ENCODE measurements at regions of chr1 and their contacts with region 1.

Region 1: DNA sequence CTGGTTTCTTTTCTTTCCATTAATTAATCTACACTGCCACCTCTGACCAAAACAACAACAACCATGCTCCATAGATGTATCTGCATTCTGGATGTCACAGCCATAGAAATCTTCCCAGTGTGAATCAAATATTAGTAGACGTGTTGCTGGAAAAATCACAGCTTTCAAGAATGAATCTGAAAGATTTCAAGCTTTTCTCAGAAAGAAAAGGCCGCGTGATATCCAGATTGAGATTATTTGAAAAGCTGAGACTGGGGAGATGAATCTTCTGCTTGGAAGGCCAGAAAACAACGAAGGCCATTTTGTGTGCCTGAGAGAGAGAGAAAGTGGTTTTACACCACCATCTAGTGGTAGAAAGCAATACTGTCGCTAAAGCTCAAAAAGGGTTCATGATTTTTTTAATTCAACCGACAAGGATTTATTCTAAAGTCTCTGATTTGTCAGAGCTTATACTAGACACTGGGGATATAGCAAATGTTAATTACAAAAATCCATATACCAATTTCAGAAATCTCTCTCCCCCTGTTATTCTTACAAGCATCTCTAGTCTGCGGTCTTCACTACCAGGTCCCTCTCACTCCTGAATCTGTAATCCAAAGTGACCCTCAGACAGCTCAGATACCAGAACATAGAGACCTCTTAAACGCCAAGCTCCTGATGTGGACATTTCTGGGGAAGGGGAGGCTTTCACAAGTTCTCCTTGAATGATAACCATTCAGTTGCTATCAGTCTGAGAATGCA is 87.5 kb upstream of the SGIP1 start:
- DNase-seq: peak in 1 of 2 donors; percentile 54
- ATAC-seq: peak in 7 of 8 donors; percentile 51 to 88 (median 70)
- H3K4me3 ChIP-seq: no peak overlapping the region
- H3K27ac ChIP-seq: peak overlapping the region in 8 of 10 donors; percentile 45 to 86 (median 66)
- H3K4me1 ChIP-seq: peaks cover 3 to 42% (median 33%) of the 10 kb centered on the region in 9 donors
- H3K27me3 ChIP-seq: no peaks in the 10 kb centered on the region
- CTCF ChIP-seq: peak; percentile 83 to 94 (median 88)

Region 2: DNA sequence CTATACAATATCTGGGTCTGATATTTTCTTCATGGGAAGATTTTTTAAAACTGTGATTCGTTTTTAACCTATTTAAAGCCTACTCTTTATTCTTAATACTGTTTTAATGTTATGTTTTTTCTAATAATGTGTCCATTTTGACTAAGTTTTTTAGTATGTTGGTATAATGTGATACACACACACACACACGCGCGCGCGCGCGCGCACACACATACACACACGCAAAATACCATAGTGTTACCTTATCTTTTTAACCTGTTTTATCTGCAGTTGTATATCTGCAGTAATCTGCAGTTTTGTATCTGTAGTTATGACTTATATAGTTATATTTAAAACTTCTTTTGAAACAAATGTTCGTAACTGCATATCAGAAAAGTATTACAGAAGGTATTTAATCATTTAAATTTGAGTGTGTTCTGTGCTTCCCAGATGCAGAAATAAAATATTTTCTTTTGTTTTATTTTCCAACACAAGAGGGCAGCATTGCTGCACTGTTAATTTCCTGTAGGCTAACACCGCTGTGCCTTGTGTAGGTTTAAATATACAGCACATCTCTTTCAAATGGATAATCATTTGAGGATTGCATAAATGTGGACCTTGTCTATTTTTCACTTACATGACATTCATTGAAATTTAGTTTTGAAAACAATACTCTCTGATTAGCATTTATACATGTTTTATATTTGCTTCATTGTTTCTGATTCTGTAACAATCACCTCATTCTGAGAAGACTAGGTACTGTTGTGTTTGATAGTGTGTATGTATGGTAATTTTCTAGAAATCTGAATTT is 487.7 kb before region 1 on chr1:
- intact Hi-C with region 1: loop called in 8 of 10 experiments (anchors 2 to 5 kb)
- DNase-seq: no peak
- ATAC-seq: peak in 3 of 8 donors; percentile 29 to 46 (median 45)
- H3K4me3 ChIP-seq: no peak overlapping the region
- H3K27ac ChIP-seq: no peak overlapping the region
- H3K4me1 ChIP-seq: peaks cover 0 to 8% (median 0%) of the 10 kb centered on the region in 9 donors
- H3K27me3 ChIP-seq: peaks cover 0 to 5% (median 0%) of the 10 kb centered on the region in 7 donors
- CTCF ChIP-seq: peak; percentile 62 to 89 (median 72)

Region 3: DNA sequence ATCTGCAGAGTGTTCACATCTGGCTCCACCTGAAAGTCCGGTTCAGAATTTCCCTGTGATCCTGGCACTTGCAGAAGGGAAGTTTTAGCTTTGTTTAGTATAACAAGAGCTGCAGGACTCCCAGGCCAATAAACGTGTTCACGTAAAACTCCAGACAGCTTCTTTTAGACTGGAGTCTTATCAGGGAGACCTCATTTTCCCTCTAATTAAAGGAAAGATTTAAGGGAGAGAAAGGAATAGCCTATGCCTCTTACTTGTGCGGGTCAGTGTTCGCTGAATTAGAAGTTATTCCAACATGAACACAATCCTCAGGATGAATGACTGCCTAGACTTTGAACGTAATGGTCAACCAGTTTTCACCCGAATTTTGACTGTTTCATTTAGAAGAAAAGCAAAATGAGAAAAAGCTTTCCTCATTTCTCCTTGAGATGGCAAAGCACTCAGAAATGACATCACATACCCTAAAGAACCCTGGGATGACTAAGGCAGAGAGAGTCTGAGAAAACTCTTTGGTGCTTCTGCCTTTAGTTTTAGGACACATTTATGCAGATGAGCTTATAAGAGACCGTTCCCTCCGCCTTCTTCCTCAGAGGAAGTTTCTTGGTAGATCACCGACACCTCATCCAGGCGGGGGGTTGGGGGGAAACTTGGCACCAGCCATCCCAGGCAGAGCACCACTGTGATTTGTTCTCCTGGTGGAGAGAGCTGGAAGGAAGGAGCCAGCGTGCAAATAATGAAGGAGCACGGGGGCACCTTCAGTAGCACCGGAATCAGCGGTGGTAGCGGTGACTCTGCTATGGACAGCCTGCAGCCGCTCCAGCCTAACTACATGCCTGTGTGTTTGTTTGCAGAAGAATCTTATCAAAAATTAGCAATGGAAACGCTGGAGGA is 114.5 kb before region 1 on chr1:
- intact Hi-C with region 1: loop called in 6 of 10 experiments (anchors 5 to 10 kb)
- DNase-seq: peak; percentile 68 to 83
- ATAC-seq: peak; percentile 44 to 87 (median 66)
- H3K4me3 ChIP-seq: peak overlapping the region; percentile 32 to 72 (median 60)
- H3K27ac ChIP-seq: peak overlapping the region; percentile 74 to 97 (median 89)
- H3K4me1 ChIP-seq: peaks cover 0 to 77% (median 33%) of the 10 kb centered on the region in 9 donors
- H3K27me3 ChIP-seq: no peaks in the 10 kb centered on the region
- CTCF ChIP-seq: peak in 7 of 9 donors; percentile 13 to 42 (median 35)

Region 4: DNA sequence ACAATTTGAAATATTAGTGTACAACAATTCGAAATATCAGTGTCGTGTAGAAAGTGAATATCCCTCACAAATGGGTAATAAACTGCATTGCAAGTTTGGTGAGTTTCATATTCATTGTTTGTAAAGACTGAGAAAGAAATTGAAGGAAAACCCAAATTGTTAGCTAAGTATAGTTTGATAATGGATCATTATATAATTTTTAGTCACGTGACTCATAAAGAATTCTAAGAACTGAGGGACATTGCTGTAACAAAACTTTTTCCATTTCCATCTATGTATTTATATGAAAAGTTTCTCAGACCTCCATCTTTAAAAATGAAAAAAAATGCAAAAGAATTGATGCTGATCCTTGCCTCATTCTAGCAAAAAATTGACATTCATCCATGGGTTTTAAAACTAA is 51.5 kb after region 1 on chr1:
- intact Hi-C with region 1: loop called in 6 of 10 experiments (anchors 2 to 5 kb)
- DNase-seq: no peak
- ATAC-seq: no peak
- H3K4me3 ChIP-seq: no peak overlapping the region
- H3K27ac ChIP-seq: no peak overlapping the region
- H3K4me1 ChIP-seq: no peaks in the 10 kb centered on the region
- H3K27me3 ChIP-seq: no peaks in the 10 kb centered on the region
- CTCF ChIP-seq: no peak

Region 5: DNA sequence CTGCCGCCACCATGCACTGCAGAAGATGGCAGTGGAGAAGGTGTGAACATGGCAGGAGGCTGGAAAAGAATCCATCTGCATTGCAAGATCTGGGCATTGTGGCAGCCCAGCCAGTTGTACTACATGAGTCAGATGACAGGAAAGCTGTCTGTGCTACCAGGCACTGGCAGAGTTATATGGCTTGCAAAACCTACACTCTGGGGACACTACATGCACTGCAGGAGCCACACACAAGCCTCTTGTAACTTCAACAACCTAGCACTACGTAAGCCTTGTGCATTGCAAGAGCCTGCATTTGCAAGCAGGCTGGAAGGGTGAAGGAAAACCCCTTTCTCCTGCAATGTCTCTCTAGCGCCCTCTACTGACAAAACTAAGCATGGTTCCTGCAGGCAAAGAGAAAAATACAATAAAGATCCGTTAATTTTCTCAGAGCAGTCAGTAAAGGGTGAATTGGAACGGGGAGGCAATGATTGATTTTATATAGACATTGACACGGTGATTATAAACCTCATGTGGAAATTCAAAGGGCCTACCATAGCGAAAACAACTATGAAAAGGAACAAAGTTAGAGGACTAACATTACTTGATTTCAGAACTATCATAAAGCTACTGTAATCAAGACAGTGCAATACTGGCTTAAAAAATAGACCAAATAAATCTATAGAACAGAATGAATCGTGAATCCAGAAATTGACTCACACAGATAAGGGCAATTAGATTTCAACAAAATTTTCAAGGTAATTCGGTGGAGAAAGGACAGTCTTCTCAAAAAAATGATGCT is 279.6 kb after region 1 on chr1:
- intact Hi-C with region 1: loop called in 7 of 10 experiments (anchors 5 to 10 kb)
- DNase-seq: peak in 1 of 2 donors; percentile 68
- ATAC-seq: peak; percentile 52 to 90 (median 73)
- H3K4me3 ChIP-seq: no peak overlapping the region
- H3K27ac ChIP-seq: no peak overlapping the region
- H3K4me1 ChIP-seq: peaks cover 0 to 22% (median 8%) of the 10 kb centered on the region in 9 donors
- H3K27me3 ChIP-seq: no peaks in the 10 kb centered on the region
- CTCF ChIP-seq: peak; percentile 94 to 99 (median 96)